Right lobe of liver (tissue), 6 donors: ENCODE measurements at regions of chr19 and their contacts with region 1.

Region 1: GRCh38 chr19:13861732-13862531 is 15.0 kb upstream of the NANOS3 start:
- DNase-seq: peak; percentile 91 to 93 (median 92)
- ATAC-seq: peak; percentile 95 to 97 (median 96)
- H3K4me3 ChIP-seq: peak overlapping the region; percentile 32 to 45 (median 42)
- H3K27ac ChIP-seq: peak overlapping the region; percentile 67 to 84 (median 67)
- H3K4me1 ChIP-seq: peaks cover 0 to 6% (median 2%) of the 10 kb centered on the region in 4 donors
- H3K27me3 ChIP-seq: no peaks in the 10 kb centered on the region
- CTCF ChIP-seq: peak; percentile 97 to 99 (median 98)
- POLR2A ChIP-seq: peak; percentile 35

Region 2: DNA sequence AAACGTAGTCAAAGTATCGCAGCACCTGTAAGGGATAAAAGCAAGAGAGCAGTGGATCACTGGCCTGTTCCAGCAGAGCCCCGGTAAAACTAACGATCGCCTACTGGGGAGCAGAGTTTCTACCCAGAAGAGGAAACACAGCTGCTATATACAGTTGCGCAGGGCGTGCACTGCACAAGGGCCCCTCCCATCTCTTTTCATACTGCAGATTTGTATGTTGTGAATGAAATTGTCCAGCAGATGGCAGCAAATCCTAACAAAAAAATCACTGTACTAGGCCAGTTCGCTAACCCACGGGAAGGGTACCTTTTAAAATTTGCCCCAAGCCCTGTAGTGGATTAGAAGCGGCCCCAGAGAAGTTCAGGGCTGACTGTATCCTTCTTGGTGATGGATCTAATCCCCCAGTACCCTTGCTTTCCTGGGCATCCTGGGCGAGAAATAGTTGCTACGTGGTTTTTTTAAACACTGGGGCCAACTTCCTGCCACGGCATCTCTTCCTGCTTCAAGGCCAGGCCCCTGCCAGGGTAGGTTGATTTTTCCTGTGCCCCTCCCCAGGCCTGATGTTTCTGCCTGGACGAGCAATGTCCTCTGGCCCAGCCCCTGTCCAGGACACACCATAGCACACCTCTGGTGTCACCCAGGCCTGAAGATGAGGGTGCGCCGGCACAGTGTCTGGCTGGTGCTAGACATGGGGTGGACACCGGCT is 584.7 kb before region 1 on chr19:
- intact Hi-C with region 1: loop called in 1 of 2 experiments (anchors 10 kb)
- DNase-seq: no peak
- ATAC-seq: peak; percentile 85 to 98 (median 92)
- H3K4me3 ChIP-seq: no peak overlapping the region
- H3K27ac ChIP-seq: no peak overlapping the region
- H3K4me1 ChIP-seq: no peaks in the 10 kb centered on the region
- H3K27me3 ChIP-seq: no peaks in the 10 kb centered on the region
- CTCF ChIP-seq: peak; percentile 64 to 86 (median 68)
- POLR2A ChIP-seq: no peak

Region 3: GRCh38 chr19:13597640-13598039 is 264.3 kb before region 1 on chr19:
- intact Hi-C with region 1: loop called in 1 of 2 experiments (anchors 10 kb)
- DNase-seq: peak in 2 of 3 donors; percentile 27 to 51
- ATAC-seq: peak; percentile 78 to 89 (median 81)
- H3K4me3 ChIP-seq: no peak overlapping the region
- H3K27ac ChIP-seq: no peak overlapping the region
- H3K4me1 ChIP-seq: no peaks in the 10 kb centered on the region
- H3K27me3 ChIP-seq: no peaks in the 10 kb centered on the region
- CTCF ChIP-seq: peak; percentile 53 to 60 (median 56)
- POLR2A ChIP-seq: no peak

Region 4: DNA sequence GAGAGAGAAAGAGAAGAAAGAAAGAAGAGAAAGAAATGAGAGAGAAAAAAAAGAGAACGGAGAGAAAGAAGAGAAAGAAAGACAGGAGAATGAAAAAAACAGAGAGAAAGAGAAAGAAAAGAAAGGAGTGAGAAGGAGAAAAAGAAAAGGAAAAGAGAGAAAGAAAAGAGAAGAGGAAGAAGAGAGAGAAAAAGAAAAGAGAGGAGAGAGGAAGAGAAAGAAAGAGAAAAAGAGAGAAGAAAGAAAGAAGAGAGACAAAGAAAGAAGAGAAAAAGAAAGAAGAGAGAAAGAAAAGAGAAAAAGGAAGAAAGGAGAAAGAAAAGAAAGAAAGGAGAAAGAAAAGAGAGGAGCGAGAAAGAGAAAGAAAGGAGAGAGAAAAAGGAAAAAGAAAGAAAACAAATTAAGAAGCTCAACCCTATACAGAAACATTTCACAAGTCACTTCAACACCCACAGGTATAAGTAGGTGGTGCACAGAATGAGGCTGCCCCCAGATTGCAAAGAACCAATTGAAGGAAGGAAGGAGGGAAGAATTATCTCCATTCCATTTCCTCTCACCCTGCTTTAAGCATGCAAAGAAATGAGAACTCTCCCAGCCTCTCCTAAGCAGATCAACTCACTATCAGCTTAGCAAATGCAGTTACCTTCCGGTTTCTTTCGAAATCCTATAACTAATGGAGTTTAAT is 256.9 kb before region 1 on chr19:
- intact Hi-C with region 1: loop called in 1 of 2 experiments (anchors 5 kb)
- DNase-seq: no peak
- ATAC-seq: no peak
- H3K4me3 ChIP-seq: no peak overlapping the region
- H3K27ac ChIP-seq: no peak overlapping the region
- H3K4me1 ChIP-seq: no peaks in the 10 kb centered on the region
- H3K27me3 ChIP-seq: no peaks in the 10 kb centered on the region
- CTCF ChIP-seq: no peak
- POLR2A ChIP-seq: no peak

Region 5: DNA sequence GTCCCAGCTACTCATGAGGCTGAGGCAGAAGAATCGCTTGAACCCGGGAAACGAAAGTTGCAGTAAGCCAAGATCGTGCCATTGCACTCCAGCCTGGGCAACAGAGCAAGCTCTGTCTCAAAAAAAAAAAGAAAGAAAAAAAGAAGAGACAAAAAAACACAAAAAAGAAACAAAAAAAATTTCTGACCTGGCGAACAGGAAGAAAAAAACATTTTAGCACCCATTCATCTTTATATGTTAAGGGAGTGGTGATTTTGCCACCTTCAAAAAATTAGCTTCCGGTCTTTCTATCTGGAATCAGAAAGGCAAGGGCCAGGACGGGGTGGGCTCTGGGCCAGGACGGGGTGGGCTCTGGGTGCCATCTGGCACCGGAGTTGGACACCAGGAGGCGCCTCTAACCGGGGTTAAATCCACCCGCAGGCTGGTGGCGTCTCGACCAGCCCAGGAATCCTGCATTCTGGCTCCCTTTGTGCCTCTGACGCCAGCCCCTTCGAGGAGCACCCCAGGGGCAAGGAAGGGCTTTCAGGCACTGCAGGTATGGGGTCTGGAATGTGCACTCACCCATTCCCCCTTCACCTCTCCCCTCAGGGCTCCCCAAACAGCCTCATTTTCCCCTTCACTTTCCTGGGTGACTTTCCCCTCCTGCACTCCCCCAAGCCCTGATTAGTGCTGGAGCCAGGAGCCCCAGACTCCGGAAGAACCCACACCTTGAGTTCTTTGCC is 77.0 kb before region 1 on chr19:
- intact Hi-C with region 1: loop called (anchors 5 kb)
- DNase-seq: peak; percentile 75 to 83 (median 77)
- ATAC-seq: peak; percentile 84 to 90 (median 87)
- H3K4me3 ChIP-seq: no peak overlapping the region
- H3K27ac ChIP-seq: no peak overlapping the region
- H3K4me1 ChIP-seq: no peaks in the 10 kb centered on the region
- H3K27me3 ChIP-seq: no peaks in the 10 kb centered on the region
- CTCF ChIP-seq: peak; percentile 55 to 73 (median 67)
- POLR2A ChIP-seq: no peak

Region 6: DNA sequence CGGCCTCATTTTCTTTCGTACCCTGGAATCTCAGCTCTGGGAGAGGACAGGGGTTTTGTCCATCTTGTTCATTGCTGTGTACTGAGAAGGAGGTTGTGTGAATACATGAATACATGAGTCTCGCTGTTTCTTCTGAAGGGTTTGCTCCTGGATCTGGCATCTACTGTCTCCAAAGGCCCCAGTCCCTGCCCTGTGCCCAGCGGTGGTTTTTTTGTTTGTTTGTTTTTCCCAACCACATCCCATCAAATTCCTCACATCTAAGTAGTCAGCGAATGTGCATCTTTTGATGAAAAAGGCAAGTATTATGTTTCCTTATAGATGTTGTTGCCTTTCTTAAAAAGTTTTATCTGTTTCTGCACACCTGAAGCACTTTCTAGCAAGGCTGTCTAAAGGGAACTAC is 102.8 kb after region 1 on chr19:
- intact Hi-C with region 1: no loop called
- DNase-seq: no peak
- ATAC-seq: no peak
- H3K4me3 ChIP-seq: no peak overlapping the region
- H3K27ac ChIP-seq: no peak overlapping the region
- H3K4me1 ChIP-seq: no peaks in the 10 kb centered on the region
- H3K27me3 ChIP-seq: no peaks in the 10 kb centered on the region
- CTCF ChIP-seq: no peak
- POLR2A ChIP-seq: no peak

Region 7: GRCh38 chr19:14006243-14006765 is 144.4 kb after region 1 on chr19 and contains the start of gene RFX1:
- intact Hi-C with region 1: no loop called
- DNase-seq: peak; percentile 99 to 100 (median 100)
- ATAC-seq: peak; percentile 77 to 88 (median 80)
- H3K4me3 ChIP-seq: peak within 1 kb of the TSS; percentile 76 to 92 (median 88)
- H3K27ac ChIP-seq: peak within 1 kb of the TSS; percentile 97 to 100 (median 99)
- H3K4me1 ChIP-seq: peaks cover 0 to 16% (median 0%) of the 10 kb centered on the region in 4 donors
- H3K27me3 ChIP-seq: no peaks in the 10 kb centered on the region
- CTCF ChIP-seq: no peak
- POLR2A ChIP-seq: no peak
- total RNA-seq, gene RFX1: 2.5 to 9.3 (median 5.7) TPM